ENCODE measurements at regions of chr2 and their contacts with region 1.

Region 1: GRCh38 chr2:165401285-165401852 is 68.1 kb upstream of the CSRNP3 start:
- DNase-seq: peak in 2 of 4 donors; percentile 62 to 69
- ATAC-seq: peak; percentile 84
- H3K4me3 ChIP-seq: no peak overlapping the region
- H3K27ac ChIP-seq: no peak overlapping the region
- H3K4me1 ChIP-seq: no peaks in the 10 kb centered on the region
- H3K27me3 ChIP-seq: no peaks in the 10 kb centered on the region
- CTCF ChIP-seq: peak; percentile 48 to 55

Region 2: GRCh38 chr2:164792316-164793178 is 608.8 kb before region 1 on chr2:
- intact Hi-C with region 1: no loop called
- DNase-seq: no peak
- ATAC-seq: peak; percentile 17
- H3K4me3 ChIP-seq: no peak overlapping the region
- H3K27ac ChIP-seq: no peak overlapping the region
- H3K4me1 ChIP-seq: peaks cover 0 to 15% of the 10 kb centered on the region in 2 donors
- H3K27me3 ChIP-seq: no peaks in the 10 kb centered on the region
- CTCF ChIP-seq: no peak

Region 3: DNA sequence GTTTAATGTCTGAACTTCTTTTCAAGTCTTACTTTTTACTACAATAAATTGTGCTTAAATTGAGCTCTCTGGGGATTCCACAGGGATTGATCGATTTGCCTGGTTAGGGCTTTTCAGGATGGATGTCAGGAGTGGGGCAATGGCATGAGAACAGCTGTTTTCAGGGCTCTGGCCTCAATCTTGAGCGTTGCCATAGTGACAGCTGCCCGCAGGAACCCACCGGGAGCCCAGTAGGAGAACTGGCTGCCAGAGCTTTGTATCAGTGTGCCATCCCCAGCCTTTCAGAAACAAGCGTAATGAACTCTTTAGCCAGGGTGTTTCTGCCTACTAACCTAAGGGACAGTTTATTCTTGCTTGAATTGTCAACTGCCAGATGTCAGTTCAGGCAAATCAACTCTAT is 299.2 kb after region 1 on chr2:
- intact Hi-C with region 1: loop called in 1 of 2 experiments (anchors 5 kb)
- DNase-seq: no peak
- ATAC-seq: no peak
- H3K4me3 ChIP-seq: no peak overlapping the region
- H3K27ac ChIP-seq: no peak overlapping the region
- H3K4me1 ChIP-seq: no peaks in the 10 kb centered on the region
- H3K27me3 ChIP-seq: no peaks in the 10 kb centered on the region
- CTCF ChIP-seq: no peak

Region 4: GRCh38 chr2:165874445-165875039 is 473.2 kb after region 1 on chr2:
- intact Hi-C with region 1: loop called in 1 of 2 experiments (anchors 10 kb)
- DNase-seq: peak in 2 of 4 donors; percentile 40 to 64
- ATAC-seq: peak; percentile 95
- H3K4me3 ChIP-seq: no peak overlapping the region
- H3K27ac ChIP-seq: no peak overlapping the region
- H3K4me1 ChIP-seq: peaks cover 0 to 11% of the 10 kb centered on the region in 2 donors
- H3K27me3 ChIP-seq: no peaks in the 10 kb centered on the region
- CTCF ChIP-seq: peak; percentile 55 to 56